Activated CD4-positive, alpha-beta memory T cell treated with anti-CD3 and anti-CD28 coated beads, Interleukin-2, amount 10 ng/mL, durations not matched to agents 7 days and 5 days (primary cell): ENCODE measurements at regions of chr22 and their contacts with region 1.

Region 1: GRCh38 chr22:31585161-31585859 is 76.7 kb downstream of the PISD start:
- DNase-seq: peak; percentile 32
- H3K4me3 Mint-ChIP-seq: peak overlapping the region; percentile 8
- H3K27ac Mint-ChIP-seq: peak overlapping the region; percentile 70
- H3K4me1 Mint-ChIP-seq: peaks cover 50% of the 10 kb centered on the region
- H3K27me3 Mint-ChIP-seq: no peaks in the 10 kb centered on the region

Region 2: DNA sequence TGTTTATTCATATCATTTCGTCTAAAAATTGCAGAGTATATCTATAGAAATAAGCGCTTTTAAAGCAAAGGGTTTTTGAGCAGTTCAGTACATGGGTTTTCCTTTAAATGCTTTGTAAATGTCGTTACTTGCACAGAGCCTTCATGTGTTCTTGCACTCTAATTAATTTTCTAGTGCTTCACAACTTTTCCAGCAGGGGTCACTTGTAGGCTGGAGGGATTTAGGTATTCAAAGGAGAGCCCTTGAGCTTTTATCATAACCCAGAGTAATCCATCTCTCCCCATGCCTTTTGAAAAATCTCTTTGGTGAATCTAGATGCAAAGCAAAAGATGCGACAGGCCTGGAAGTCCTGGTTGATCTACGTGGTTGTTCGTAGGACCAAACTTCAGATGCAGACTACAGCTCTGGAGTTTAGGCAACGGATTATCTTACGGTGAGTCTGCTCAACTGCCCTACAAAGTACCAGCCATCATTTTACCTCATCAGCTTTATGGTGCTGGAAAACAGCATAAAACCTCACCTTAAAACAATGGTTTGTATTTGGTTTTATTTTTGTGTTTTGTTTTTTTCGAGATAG is 28.6 kb before region 1 on chr22:
- CTCF ChIA-PET with region 1: interaction called, 11 read pairs
- POLR2A ChIA-PET with region 1: interaction called, 3 read pairs
- DNase-seq: no peak
- H3K4me3 Mint-ChIP-seq: no peak overlapping the region
- H3K27ac Mint-ChIP-seq: peak overlapping the region; percentile 44
- H3K4me1 Mint-ChIP-seq: peaks cover 19% of the 10 kb centered on the region
- H3K27me3 Mint-ChIP-seq: no peaks in the 10 kb centered on the region